ENCODE measurements at regions of chr2 and their contacts with region 1.

Region 1: GRCh38 chr2:20443276-20443920 is 3.5 kb upstream of the RHOB start:
- DNase-seq: no peak
- H3K4me3 ChIP-seq: peak overlapping the region; percentile 90
- H3K27ac ChIP-seq: peak overlapping the region; percentile 99
- H3K4me1 ChIP-seq: peaks cover 50% of the 10 kb centered on the region
- H3K27me3 ChIP-seq: no peaks in the 10 kb centered on the region
- CTCF ChIP-seq: peak; percentile 74

Region 2: GRCh38 chr2:20642055-20642971 is 198.9 kb after region 1 on chr2:
- intact Hi-C with region 1: loop called (anchors 2 kb)
- DNase-seq: peak; percentile 80
- H3K4me3 ChIP-seq: no peak overlapping the region
- H3K27ac ChIP-seq: peak overlapping the region; percentile 85
- H3K4me1 ChIP-seq: peaks cover 59% of the 10 kb centered on the region
- H3K27me3 ChIP-seq: no peaks in the 10 kb centered on the region
- CTCF ChIP-seq: peak; percentile 97